Esophagus squamous epithelium (tissue), 5 donors: ENCODE measurements at regions of chr5 and their contacts with region 1.

Region 1: DNA sequence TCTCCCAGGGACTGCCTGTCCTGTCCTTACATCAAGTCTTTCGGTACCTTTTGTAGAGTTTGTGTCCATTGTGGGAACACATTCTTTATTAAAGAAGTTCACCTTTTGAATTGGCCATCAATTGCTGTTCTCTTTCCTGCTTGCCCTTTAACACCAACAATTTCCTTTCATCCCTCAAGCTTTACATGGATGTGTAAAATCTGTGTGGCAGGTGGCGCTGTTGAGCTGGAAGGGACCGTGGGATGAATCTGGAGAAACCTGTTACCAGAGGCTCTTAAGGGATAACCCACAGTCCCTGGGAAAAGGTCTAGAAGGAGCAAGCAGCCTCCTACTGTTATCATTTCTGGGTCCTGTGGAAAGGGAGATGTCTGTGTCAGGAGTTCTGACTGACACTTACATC is 7.9 kb upstream of the ZFP62 start:
- DNase-seq: no peak
- H3K4me3 ChIP-seq: no peak overlapping the region
- H3K27ac ChIP-seq: peak overlapping the region in 3 of 4 donors; percentile 38 to 81 (median 75)
- H3K4me1 ChIP-seq: peaks cover 8 to 43% (median 14%) of the 10 kb centered on the region in 3 donors
- H3K27me3 ChIP-seq: no peaks in the 10 kb centered on the region
- CTCF ChIP-seq: peak; percentile 74 to 91 (median 88)
- POLR2A ChIP-seq: no peak

Region 2: DNA sequence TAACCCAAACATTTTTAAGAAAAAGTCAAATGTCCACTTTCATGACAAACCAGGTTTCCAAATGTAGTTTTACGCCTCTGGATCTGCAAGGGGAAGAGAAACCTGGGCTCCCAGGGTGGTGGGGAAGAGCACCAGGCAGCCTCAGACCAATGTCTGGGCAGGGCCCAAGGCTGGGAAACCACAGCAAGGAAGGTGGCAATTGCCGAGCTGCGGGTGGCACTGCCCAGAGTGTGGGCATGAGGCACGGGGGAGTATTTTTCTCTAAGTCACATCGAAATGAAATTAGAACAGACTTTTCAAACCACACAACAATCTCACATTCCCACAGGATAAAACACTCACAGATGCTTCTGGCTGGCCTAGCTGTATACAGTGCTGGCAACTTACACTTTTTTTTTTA is 627.4 kb before region 1 on chr5:
- intact Hi-C with region 1: no loop called
- DNase-seq: no peak
- H3K4me3 ChIP-seq: no peak overlapping the region
- H3K27ac ChIP-seq: no peak overlapping the region
- H3K4me1 ChIP-seq: no peaks in the 10 kb centered on the region
- H3K27me3 ChIP-seq: no peaks in the 10 kb centered on the region
- CTCF ChIP-seq: no peak
- POLR2A ChIP-seq: no peak

Region 3: DNA sequence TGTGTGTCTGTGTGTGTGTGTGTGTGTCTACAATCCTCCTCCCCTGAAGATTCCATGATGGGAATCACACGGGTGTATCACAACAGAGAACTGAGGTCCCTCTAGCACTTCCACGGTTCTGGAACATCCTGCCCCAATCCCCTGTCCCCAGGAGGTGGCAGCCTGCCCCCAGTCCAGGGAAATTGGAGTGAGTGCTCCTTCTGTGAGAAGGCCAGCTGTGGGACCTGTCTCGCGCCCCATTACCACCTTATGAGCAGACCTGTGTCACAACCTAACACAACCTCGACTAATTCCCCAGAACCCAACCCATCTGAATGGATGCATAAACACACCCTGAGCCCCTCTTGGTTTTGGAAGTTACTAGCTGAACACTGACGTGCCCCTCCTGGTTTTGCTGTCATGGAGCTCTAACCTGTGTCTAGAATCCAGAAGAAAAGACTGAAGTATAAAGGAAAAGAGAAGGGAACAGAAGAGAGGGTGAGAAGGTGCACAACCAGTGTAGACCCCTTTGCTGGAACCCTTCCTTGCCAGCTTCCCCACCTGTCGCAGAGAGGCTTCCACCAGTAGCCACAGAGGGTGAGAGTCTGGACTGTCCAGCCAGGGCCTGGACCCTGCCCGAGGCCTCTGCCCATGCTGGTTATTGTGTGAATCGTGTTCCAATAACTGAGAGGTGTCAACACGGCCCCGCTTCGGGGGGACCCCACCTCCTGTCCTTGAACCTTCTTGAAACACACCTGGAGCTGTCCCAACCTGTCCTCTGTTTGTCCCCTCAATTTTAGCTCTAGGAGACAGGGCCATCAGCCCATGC is 174.5 kb after region 1 on chr5:
- intact Hi-C with region 1: no loop called
- DNase-seq: no peak
- H3K4me3 ChIP-seq: no peak overlapping the region
- H3K27ac ChIP-seq: peak overlapping the region in 2 of 4 donors; percentile 3 to 34
- H3K4me1 ChIP-seq: no peaks in the 10 kb centered on the region
- H3K27me3 ChIP-seq: peaks cover 0 to 91% (median 1%) of the 10 kb centered on the region in 4 donors
- CTCF ChIP-seq: peak in 1 of 6 experiments; percentile 7
- POLR2A ChIP-seq: no peak

Region 4: GRCh38 chr5:181159286-181159829 is 290.4 kb after region 1 on chr5:
- intact Hi-C with region 1: loop called (anchors 5 kb)
- DNase-seq: peak; percentile 31
- H3K4me3 ChIP-seq: no peak overlapping the region
- H3K27ac ChIP-seq: peak overlapping the region in 1 of 4 donors; percentile 91
- H3K4me1 ChIP-seq: peaks cover 0 to 22% (median 8%) of the 10 kb centered on the region in 3 donors
- H3K27me3 ChIP-seq: peaks cover 0 to 37% (median under 1%) of the 10 kb centered on the region in 4 donors
- CTCF ChIP-seq: peak; percentile 74 to 90 (median 86)
- POLR2A ChIP-seq: no peak